GM10248 (cell line): ENCODE measurements at regions of chr7 and their contacts with region 1.

Region 1: DNA sequence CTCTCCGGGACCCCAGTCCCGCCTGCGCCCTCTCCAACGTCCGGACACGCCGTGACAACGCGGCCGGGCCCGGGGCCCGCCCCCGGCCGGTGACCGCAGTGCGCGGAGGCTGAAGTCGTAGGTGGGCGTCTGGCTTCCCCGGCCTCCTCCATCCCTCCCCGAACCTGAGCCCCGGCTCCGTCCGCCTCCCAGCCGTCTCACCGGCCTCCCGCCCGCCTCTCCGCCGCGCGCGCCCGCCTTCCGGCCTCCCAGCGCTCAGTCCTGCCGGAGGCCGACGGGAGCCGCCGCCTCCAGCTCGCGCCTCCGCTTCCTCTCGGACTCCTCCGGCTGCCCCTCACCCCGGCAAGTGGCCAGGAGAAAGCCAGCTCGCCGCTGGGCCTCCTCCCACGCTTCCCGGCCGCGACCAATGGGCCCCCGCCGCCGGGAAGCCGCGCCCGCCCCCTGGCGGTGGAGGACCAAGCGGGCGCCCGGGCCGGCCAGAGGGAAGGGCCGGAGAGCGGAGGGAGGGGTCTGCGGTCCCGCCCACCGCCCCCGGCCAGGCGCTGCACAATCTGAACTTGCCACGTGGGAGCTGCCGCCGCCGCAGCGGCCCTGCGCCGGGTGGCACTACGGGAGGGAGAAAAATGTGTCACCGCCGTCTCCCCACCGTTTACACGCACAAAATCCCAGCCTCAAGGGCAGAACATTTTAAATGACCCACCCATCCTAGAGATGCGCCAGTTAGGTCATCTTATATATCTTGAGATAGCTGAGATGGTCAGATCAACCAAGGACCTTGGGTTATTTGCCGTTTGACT is at the start of gene FAM3C:
- DNase-seq: peak; percentile 93
- CTCF ChIP-seq: peak; percentile 82

Region 2: GRCh38 chr7:120941064-120941463 is 455.1 kb before region 1 on chr7:
- CTCF ChIA-PET with region 1: no interaction called
- POLR2A ChIA-PET with region 1: no interaction called
- DNase-seq: no peak
- CTCF ChIP-seq: peak; percentile 31

Region 3: DNA sequence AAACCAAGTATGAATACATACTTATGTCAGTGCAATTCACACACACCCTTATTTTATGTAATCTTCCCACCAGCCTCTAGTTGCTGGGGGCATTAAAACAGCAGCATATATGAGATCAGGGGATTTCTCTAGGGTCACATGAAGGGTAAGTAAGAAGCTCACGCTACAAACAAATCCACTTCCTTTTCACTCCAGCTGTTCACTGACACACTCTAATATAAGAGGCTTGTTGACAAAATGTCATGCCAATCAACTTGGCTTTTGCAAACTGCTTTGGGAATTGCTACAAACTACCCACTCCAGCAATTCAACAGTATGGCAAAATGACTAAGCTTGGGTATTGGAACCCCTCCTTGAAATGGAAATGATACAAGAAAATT is 10.4 kb before region 1 on chr7:
- CTCF ChIA-PET with region 1: interaction called, 158 read pairs
- POLR2A ChIA-PET with region 1: interaction called, 8 read pairs
- DNase-seq: peak; percentile 41
- CTCF ChIP-seq: no peak

Region 4: DNA sequence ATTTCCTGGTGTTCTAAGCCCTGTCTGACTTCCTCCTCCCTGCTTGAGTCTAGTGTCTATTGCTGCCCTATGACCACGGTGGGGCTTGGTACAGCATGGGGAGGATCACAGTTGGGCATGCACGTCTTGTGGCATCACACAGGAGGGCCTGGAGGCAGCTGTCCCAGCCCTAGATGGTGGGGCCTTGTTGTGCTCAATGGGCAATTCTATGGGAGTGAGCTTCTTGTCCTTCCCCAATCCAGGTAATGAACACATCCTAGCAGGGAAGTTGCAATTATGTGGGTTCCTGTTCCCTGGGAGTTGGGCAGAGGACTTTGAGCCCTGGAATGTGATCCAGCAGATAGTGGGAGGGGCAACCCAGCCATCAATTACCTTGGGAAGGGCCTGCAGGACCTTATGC is 10.8 kb after region 1 on chr7:
- CTCF ChIA-PET with region 1: interaction called, 56 read pairs
- POLR2A ChIA-PET with region 1: no interaction called
- DNase-seq: no peak
- CTCF ChIP-seq: no peak

Region 5: DNA sequence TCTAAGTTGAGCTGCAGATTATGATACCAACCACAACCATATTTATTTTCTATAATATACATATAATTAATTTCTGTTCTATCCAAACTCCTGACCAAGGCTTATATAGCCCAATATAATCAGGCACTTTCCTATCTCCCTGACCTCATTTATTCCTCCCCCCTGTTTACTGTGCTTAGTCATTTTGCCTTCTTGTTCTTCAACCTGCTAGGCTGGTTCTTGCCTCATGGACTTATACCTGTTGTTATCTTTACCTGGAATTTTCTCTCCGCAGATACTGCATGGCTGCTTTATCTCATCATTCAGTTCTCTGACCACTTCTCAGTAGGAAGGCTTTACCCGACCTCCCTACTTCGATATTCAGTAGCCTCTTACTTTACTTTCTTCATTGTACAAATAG is 24.8 kb after region 1 on chr7:
- CTCF ChIA-PET with region 1: interaction called, 10 read pairs
- POLR2A ChIA-PET with region 1: no interaction called
- DNase-seq: no peak
- CTCF ChIP-seq: no peak

Region 6: DNA sequence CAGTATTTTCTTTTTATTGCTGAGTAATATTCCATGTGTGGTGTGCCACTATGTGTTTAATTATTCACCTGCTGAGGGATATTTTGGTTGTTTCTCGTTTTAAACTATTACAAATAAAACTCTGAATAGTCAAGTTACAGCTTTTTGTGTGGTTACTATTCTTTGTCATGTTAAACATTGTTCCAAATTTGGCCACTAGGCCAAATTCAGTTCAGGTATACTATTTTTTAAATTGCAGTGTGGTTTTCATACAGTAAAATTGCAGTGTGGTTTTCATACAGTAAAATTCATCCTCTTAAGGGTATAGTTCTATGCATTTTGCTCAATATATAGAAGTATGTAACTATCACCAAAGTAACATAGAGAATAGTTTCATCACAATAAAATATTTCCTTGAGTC is 97.4 kb after region 1 on chr7:
- CTCF ChIA-PET with region 1: no interaction called
- POLR2A ChIA-PET with region 1: no interaction called
- DNase-seq: no peak
- CTCF ChIP-seq: no peak

Region 7: GRCh38 chr7:121530227-121531174 is 134.3 kb after region 1 on chr7:
- CTCF ChIA-PET with region 1: interaction called, 11 read pairs
- POLR2A ChIA-PET with region 1: no interaction called
- DNase-seq: peak; percentile 54
- CTCF ChIP-seq: no peak

Region 8: DNA sequence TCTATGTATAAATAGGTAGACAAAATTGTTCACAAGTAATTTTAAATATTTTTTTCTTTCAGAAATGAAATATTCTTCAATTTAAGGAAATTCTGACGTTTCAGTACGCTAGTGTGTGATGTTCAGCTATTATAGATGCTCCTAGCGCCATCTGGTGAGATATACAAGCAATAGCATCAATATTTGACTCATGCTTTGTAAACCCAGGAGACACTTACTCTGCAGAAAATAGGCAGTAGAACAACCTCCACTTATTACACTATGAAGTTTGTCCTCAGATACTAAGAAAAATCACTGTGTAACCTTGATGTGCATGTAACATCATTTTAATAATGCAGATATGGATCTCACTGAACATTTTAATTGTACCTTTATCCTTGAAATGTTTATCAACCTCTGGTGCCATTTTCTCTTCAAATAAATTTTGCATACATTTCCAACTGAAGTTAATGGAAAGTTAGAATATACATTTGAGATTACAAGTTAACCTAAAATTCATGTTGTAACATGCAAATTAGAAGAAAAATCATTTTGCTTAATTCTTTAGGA is 151.5 kb after region 1 on chr7:
- CTCF ChIA-PET with region 1: interaction called, 17 read pairs
- POLR2A ChIA-PET with region 1: no interaction called
- DNase-seq: peak; percentile 51
- CTCF ChIP-seq: peak; percentile 71

Region 9: GRCh38 chr7:121994625-121995410 is 598.7 kb after region 1 on chr7:
- CTCF ChIA-PET with region 1: interaction called, 10 read pairs
- POLR2A ChIA-PET with region 1: no interaction called
- DNase-seq: peak; percentile 57
- CTCF ChIP-seq: peak; percentile 79